OCI-LY7 (cell line): ENCODE measurements at regions of chr9 and their contacts with region 1.

Region 1: DNA sequence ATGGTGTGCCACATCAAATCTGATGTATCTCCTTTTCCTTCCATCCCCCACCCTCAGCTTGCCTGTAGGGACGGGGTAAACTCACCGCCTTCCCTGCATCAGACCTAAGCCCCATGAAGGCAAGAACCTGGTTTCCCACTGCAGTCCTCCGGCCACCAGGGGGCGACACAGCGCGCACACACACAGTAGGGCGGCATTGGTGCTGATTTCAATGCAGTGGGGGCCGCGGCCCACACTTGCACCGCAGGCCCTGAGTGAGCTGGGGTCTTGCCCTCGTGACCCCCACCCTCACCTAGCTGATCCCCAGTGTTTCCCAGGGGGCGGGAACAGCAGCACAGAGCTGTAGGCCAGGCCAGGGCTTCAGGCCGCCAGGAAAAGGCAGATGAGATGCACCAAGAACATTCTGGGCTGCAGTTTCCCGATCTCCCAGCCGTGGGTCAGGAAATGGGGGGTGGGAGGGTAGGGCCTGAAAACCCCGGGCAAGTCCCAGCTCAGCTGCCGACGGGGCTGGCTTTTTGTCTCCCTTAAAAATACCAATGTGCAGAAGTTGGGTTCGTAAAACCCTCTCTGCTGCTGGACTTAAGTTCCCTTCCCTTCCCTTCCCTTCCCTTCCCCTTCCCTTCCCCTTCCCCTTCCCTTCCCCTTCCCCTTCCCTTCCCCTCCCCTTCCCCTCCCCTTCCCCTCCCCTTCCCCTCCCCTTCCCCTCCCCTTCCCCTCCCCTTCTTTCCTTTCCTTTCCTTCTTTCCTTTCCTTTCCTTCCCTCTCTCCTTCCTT is 19.5 kb downstream of the FAM163B start:
- DNase-seq: peak; percentile 66
- H3K4me3 ChIP-seq: no peak overlapping the region
- H3K27ac ChIP-seq: no peak overlapping the region
- H3K4me1 ChIP-seq: peaks cover 26% of the 10 kb centered on the region
- CTCF ChIP-seq: peak; percentile 93

Region 2: DNA sequence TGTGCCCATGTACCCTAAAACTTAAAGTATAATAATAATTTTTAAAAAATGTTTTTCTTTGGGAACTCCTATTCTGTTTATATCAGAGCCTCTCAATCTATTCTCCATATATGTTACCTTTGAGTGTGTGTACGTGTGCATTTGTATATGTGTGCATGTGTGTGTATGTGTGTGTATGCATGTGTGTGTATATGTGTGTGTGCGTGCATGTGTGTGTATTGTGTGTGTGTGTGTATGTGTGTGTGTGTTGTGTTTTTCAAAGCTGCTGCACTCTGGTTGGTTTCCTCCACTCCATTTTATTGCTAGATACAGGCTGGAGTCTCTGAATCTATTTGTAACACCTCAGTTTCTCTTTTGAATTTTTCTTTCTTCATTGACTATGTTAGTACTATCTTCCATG is 273.6 kb before region 1 on chr9:
- CTCF ChIA-PET with region 1: no interaction called
- POLR2A ChIA-PET with region 1: no interaction called
- intact Hi-C with region 1: no loop called
- DNase-seq: no peak
- H3K4me3 ChIP-seq: no peak overlapping the region
- H3K27ac ChIP-seq: no peak overlapping the region
- H3K4me1 ChIP-seq: no peaks in the 10 kb centered on the region
- CTCF ChIP-seq: no peak

Region 3: DNA sequence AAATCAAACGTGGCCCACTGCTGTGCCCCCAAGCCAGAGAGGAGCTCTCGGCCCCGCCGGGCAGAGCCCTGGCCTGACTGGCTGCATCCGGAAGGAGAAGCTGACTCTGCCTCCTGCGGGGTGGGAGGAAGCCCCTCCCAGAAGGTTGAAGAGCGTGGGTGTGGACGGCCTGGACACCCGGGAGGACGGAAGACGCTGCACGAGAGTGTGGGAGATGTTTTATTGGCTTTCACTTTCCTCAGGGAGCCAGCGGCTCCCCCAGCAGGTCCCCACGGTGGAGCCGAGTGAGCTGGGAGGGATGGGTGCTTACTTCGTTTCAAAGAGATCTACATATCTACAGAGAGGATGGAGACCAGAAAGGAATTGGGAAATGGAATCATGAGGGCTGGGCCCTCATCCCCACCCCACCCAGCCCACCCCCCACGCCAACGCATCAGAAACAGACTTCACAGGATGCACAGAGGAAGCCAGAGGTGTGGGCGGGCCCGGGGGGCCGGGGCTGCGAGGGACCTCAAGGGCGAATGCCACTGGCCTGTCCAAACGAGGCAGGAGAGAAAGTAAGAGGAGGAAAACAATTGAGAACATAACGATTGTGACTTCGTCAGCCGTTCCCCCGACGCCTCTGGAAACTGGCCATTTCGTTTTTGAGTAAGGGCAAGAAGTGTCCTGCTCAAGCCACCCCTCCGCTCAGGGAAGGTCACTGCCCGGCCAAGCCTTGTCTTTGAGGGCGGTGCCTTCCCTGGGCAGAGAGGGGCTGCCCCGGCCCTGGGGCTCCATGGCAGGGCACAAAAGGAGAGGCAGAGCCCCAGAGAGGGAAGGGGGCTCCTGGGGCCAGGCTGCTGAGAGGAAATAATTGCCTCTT is 12.5 kb before region 1 on chr9:
- CTCF ChIA-PET with region 1: no interaction called
- POLR2A ChIA-PET with region 1: no interaction called
- intact Hi-C with region 1: no loop called
- DNase-seq: no peak
- H3K4me3 ChIP-seq: no peak overlapping the region
- H3K27ac ChIP-seq: no peak overlapping the region
- H3K4me1 ChIP-seq: peaks cover 49% of the 10 kb centered on the region
- CTCF ChIP-seq: no peak

Region 4: DNA sequence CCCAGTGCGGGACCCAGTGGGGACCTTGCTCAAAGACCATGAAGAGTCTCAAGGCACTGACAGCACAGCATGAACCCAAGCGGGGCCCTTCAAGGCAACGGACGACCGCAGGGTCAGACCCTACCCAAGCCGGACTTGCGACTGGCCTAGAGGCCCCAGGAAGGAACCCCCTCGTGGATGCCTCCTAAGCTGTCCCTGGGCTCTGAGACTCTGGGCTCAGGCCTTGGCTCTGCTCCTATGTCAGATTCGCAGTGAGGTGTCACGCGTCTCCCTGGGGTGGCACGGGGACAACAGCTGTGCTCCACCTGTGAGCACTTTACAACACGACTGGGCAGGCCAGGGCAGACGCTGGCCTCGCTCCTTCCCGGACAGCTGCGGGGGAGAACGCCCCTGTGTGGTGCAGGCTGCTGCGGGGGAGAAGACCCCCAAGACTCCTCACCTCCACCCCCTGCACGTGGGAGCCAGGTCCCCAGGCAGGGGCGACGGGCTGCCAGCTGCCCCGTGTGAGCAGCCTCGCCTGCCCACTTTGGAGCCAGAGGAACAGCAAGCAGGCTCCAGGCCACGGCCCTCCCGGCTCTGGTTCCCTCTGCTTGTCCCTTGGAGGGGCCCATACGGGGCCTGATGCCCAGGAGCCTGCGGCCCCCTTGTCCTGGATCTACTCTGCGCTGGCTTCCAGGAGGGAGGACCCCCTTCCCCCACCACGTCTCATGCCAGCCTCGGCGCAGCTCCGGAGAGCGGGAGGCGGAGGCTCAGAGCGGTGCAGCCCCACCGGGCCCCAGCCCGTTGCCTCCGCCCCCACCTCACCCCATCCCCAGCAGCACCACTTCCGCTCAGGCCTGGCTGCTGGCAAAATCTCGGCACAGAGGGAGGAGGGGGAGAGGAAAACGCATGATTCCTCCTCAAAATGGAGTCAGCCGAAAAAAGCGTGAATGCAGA is 112.5 kb after region 1 on chr9:
- CTCF ChIA-PET with region 1: interaction called, 3 read pairs
- POLR2A ChIA-PET with region 1: interaction called, 4 read pairs
- intact Hi-C with region 1: loop called (anchors 1 kb)
- DNase-seq: peak; percentile 88
- H3K4me3 ChIP-seq: peak overlapping the region; percentile 73
- H3K27ac ChIP-seq: peak overlapping the region; percentile 91
- H3K4me1 ChIP-seq: peaks cover 83% of the 10 kb centered on the region
- CTCF ChIP-seq: no peak